CD14-positive monocyte (primary cell): ENCODE measurements at regions of chr14 and their contacts with region 1.

Region 1: DNA sequence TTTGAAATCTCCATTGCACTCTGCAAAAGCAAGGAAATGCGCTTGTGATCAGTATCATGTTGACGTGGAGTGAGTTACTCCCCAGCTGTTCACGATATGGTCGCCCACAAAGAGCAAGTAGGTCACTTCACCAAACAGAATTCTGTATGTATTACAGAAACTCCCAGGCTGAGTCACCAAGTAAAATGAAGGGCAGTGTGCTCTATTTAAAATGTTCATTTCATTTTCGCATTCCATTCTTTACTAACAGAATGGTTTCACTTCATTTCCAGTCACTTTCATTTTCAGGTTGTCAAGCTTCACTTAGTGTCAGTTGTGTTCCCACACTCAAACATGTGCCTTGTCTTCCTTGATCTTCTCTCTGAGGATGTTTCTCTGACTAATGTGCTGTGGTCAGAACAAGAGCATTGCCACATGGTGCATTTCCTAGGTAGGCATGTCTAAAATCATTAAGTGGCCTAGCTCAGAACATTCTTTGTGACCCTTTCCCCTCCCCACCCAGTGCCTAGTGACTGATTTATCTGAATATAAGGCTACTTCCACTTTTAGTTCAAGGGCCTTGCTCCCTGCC is 391.2 kb downstream of the RAD51B start:
- DNase-seq: peak; percentile 89 to 95 (median 92)
- H3K4me3 ChIP-seq: peak overlapping the region; percentile 31 to 73 (median 64)
- H3K4me3 Mint-ChIP-seq: peak overlapping the region; percentile 70 to 86
- H3K27ac ChIP-seq: peak overlapping the region in 1 of 2 donors; percentile 88
- H3K27ac Mint-ChIP-seq: peak overlapping the region; percentile 87 to 98 (median 94)
- H3K4me1 ChIP-seq: peaks cover 25 to 28% of the 10 kb centered on the region in 2 donors
- H3K4me1 Mint-ChIP-seq: peaks cover 34% of the 10 kb centered on the region
- H3K27me3 ChIP-seq: no peaks in the 10 kb centered on the region
- H3K27me3 Mint-ChIP-seq: no peaks in the 10 kb centered on the region
- CTCF ChIP-seq: no peak

Region 2: DNA sequence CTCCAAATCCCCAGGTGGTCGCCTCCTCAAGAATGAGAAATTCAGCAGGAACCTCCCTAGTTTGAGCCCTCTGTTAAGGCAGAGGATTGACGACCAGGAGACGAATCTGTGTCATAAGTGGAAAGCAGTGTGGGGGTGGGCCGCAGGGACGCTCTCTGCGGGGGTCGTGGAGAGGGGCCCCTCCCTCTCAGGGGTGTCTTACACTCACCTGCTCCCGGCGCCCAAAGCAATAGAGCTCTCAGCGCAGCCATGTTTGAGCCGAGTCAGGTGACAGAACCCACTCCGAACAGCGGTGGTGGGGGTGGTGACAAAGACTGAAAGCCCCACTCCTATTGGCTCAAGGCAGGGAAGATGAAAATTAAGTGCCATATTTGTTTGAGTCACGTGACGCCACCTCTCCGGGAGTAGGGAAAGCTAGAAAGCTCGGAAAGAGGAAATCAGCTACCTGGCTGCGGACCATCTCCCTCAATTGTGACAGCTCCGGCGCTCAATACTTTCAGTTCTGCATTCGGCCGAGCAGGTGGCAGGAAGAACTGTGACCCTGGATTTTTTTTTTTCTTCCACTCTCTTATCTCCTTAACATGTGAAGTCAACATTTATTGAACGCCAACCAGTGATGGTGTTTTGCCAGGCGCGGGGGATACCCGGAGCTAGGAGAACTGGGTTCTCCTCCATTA is 394.4 kb before region 1 on chr14 and contains the start of gene ZFYVE26:
- intact Hi-C with region 1: loop called in 1 of 2 experiments (anchors 10 kb)
- DNase-seq: peak; percentile 78 to 96 (median 93)
- H3K4me3 ChIP-seq: peak within 1 kb of the TSS; percentile 81 to 89 (median 81)
- H3K4me3 Mint-ChIP-seq: peak within 1 kb of the TSS; percentile 88 to 95
- H3K27ac ChIP-seq: peak within 1 kb of the TSS; percentile 74 to 90
- H3K27ac Mint-ChIP-seq: peak within 1 kb of the TSS; percentile 93 to 97 (median 95)
- H3K4me1 ChIP-seq: peaks cover 59 to 65% of the 10 kb centered on the region in 2 donors
- H3K4me1 Mint-ChIP-seq: peaks cover 66% of the 10 kb centered on the region
- H3K27me3 ChIP-seq: no peaks in the 10 kb centered on the region
- H3K27me3 Mint-ChIP-seq: no peaks in the 10 kb centered on the region
- CTCF ChIP-seq: no peak
- polyA plus RNA-seq, gene ZFYVE26: 1.0 to 17.6 (median 2.3) TPM

Region 3: GRCh38 chr14:67963960-67964744 is 246.7 kb before region 1 on chr14:
- intact Hi-C with region 1: loop called in 1 of 2 experiments (anchors 10 kb)
- DNase-seq: peak; percentile 21 to 58 (median 34)
- H3K4me3 ChIP-seq: peak overlapping the region in 1 of 3 experiments; percentile 55
- H3K4me3 Mint-ChIP-seq: peak overlapping the region in 1 of 2 donors; percentile 67
- H3K27ac ChIP-seq: peak overlapping the region in 1 of 2 donors; percentile 72
- H3K27ac Mint-ChIP-seq: peak overlapping the region; percentile 82 to 94 (median 90)
- H3K4me1 ChIP-seq: peaks cover 52 to 61% of the 10 kb centered on the region in 2 donors
- H3K4me1 Mint-ChIP-seq: peaks cover 57% of the 10 kb centered on the region
- H3K27me3 ChIP-seq: no peaks in the 10 kb centered on the region
- H3K27me3 Mint-ChIP-seq: no peaks in the 10 kb centered on the region
- CTCF ChIP-seq: no peak